ENCODE measurements at regions of chr2 and their contacts with region 1.

Region 1: GRCh38 chr2:127415593-127416505 is 2.4 kb upstream of the PROC start:
- DNase-seq: peak; percentile 61
- H3K4me3 Mint-ChIP-seq: peak overlapping the region; percentile 65
- H3K27ac Mint-ChIP-seq: peak overlapping the region; percentile 24
- H3K4me1 Mint-ChIP-seq: peaks cover 30% of the 10 kb centered on the region
- H3K27me3 Mint-ChIP-seq: no peaks in the 10 kb centered on the region
- CTCF ChIP-seq: peak; percentile 58

Region 2: GRCh38 chr2:127324635-127325034 is 91.2 kb before region 1 on chr2:
- CTCF ChIA-PET with region 1: interaction called, 4 read pairs
- POLR2A ChIA-PET with region 1: interaction called, 3 read pairs
- intact Hi-C with region 1: loop called (anchors 2 kb)
- DNase-seq: peak; percentile 54
- H3K4me3 Mint-ChIP-seq: no peak overlapping the region
- H3K27ac Mint-ChIP-seq: no peak overlapping the region
- H3K4me1 Mint-ChIP-seq: no peaks in the 10 kb centered on the region
- H3K27me3 Mint-ChIP-seq: no peaks in the 10 kb centered on the region
- CTCF ChIP-seq: peak; percentile 61

Region 3: GRCh38 chr2:127355386-127356008 is 60.4 kb before region 1 on chr2:
- CTCF ChIA-PET with region 1: interaction called, 3 read pairs
- POLR2A ChIA-PET with region 1: interaction called, 3 read pairs
- intact Hi-C with region 1: loop called (anchors 5 kb)
- DNase-seq: peak; percentile 50
- H3K4me3 Mint-ChIP-seq: no peak overlapping the region
- H3K27ac Mint-ChIP-seq: no peak overlapping the region
- H3K4me1 Mint-ChIP-seq: peaks cover 16% of the 10 kb centered on the region
- H3K27me3 Mint-ChIP-seq: no peaks in the 10 kb centered on the region
- CTCF ChIP-seq: peak; percentile 70

Region 4: GRCh38 chr2:127387655-127388422 is 28.0 kb before region 1 on chr2 and contains the start of gene MAP3K2:
- CTCF ChIA-PET with region 1: interaction called, 9 read pairs
- POLR2A ChIA-PET with region 1: interaction called, 40 read pairs
- intact Hi-C with region 1: loop called (anchors 2 kb)
- DNase-seq: peak; percentile 91
- H3K4me3 Mint-ChIP-seq: peak within 1 kb of the TSS; percentile 90
- H3K27ac Mint-ChIP-seq: peak within 1 kb of the TSS; percentile 93
- H3K4me1 Mint-ChIP-seq: peaks cover 33% of the 10 kb centered on the region
- H3K27me3 Mint-ChIP-seq: no peaks in the 10 kb centered on the region
- CTCF ChIP-seq: no peak
- total RNA-seq, gene MAP3K2: 62.9 and 65.6 TPM in 2 replicates

Region 5: DNA sequence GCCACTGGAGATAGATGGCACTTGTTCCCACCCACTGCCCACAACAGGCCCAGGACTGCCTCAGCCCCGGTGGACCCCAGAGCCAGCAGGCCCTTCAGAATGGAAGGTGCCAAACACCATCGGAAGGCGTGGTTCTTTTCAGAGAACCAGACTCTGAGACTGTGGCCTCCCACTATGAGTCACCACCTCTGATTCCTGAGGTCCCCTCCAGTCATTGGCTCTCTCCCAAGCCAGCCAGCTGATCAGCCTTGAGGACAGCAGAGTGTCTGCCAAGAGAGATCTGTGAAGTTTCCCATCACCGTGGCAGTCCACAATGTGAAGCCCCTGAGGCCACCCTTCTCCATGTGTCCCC is 17.6 kb before region 1 on chr2:
- CTCF ChIA-PET with region 1: interaction called, 6 read pairs
- POLR2A ChIA-PET with region 1: interaction called, 57 read pairs
- intact Hi-C with region 1: no loop called
- DNase-seq: peak; percentile 96
- H3K4me3 Mint-ChIP-seq: no peak overlapping the region
- H3K27ac Mint-ChIP-seq: peak overlapping the region; percentile 19
- H3K4me1 Mint-ChIP-seq: peaks cover 34% of the 10 kb centered on the region
- H3K27me3 Mint-ChIP-seq: no peaks in the 10 kb centered on the region
- CTCF ChIP-seq: no peak

Region 6: GRCh38 chr2:127516031-127516762 is 100.3 kb after region 1 on chr2:
- CTCF ChIA-PET with region 1: no interaction called
- POLR2A ChIA-PET with region 1: no interaction called
- intact Hi-C with region 1: no loop called
- DNase-seq: no peak
- H3K4me3 Mint-ChIP-seq: no peak overlapping the region
- H3K27ac Mint-ChIP-seq: no peak overlapping the region
- H3K4me1 Mint-ChIP-seq: peaks cover 7% of the 10 kb centered on the region
- H3K27me3 Mint-ChIP-seq: no peaks in the 10 kb centered on the region
- CTCF ChIP-seq: no peak

Measured in MCF 10A (cell line).